Activated CD8-positive, alpha-beta T cell treated with anti-CD3 and anti-CD28 coated beads, Interleukin-2, amount 10 ng/mL, durations not matched to agents 7 days and 5 days (primary cell): ENCODE measurements at regions of chr1 and their contacts with region 1.

Region 1: DNA sequence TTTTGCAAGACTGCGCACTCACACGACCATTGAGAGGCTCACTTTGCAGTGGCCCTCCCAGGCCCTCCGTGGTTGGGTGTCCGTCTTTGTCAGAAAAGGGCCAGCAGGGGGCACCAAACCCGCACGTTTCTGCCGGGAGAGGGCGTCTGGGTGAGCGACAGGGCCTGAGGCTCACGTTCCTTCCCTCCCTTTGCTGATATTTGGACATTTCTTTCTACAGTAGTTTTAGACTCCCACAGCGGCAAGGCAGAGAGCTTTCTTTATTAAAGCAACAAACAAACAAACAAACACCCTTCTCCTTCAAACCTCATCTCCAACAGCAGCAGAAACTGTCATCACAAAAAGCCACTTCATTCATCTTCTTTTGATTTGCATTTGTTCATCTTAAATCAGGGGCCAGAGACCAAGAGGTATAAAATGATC is 79.2 kb upstream of the WDR26 start:
- DNase-seq: peak; percentile 91
- ATAC-seq: peak; percentile 97
- H3K4me3 Mint-ChIP-seq: no peak overlapping the region
- H3K27ac Mint-ChIP-seq: no peak overlapping the region
- H3K4me1 Mint-ChIP-seq: peaks cover 27% of the 10 kb centered on the region
- H3K27me3 Mint-ChIP-seq: no peaks in the 10 kb centered on the region

Region 2: DNA sequence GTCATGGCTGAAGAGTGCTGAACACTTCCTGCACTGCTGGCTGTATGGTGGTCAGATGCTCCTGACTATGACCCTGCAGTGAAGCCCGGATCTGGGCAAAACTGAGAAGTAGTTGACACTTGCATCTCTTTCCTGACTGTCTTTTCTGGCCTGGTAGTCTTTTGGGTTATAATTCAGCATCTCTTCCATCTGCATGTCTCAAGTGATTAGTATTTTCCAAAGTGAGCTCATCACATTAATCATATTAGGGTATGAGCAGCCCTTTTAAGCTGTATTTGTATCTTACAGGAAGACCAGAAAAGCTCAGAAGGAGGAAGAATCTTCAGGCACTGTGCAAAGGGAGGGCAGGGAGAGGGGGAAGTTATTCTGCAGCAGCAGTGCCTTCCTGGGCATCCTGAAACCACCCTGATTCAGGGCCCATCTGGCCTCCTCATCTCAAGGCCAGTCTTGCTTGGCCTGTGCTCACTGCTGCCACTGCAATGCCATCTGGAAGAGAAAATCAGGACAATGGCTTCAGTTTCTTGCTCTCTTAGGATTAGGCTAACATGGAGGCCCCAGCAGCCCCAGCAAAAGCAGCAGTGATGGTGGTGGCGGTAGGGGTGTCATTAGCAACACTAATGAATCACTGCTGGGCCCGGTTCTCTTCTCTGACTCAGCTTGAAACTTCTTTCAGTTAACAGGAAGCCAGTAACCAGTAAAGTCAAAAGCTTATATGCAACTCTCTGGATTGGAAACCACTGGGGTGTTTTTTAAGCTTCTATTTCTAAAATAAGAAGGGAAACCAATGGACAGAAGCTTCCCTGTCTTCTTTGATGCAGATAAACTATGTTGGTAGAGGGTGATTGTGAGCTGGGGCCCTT is 15.9 kb before region 1 on chr1:
- CTCF ChIA-PET with region 1: interaction called, 34 read pairs
- POLR2A ChIA-PET with region 1: interaction called, 7 read pairs
- DNase-seq: peak; percentile 84
- ATAC-seq: peak; percentile 93
- H3K4me3 Mint-ChIP-seq: peak overlapping the region; percentile 28
- H3K27ac Mint-ChIP-seq: peak overlapping the region; percentile 87
- H3K4me1 Mint-ChIP-seq: peaks cover 54% of the 10 kb centered on the region
- H3K27me3 Mint-ChIP-seq: no peaks in the 10 kb centered on the region

Region 3: DNA sequence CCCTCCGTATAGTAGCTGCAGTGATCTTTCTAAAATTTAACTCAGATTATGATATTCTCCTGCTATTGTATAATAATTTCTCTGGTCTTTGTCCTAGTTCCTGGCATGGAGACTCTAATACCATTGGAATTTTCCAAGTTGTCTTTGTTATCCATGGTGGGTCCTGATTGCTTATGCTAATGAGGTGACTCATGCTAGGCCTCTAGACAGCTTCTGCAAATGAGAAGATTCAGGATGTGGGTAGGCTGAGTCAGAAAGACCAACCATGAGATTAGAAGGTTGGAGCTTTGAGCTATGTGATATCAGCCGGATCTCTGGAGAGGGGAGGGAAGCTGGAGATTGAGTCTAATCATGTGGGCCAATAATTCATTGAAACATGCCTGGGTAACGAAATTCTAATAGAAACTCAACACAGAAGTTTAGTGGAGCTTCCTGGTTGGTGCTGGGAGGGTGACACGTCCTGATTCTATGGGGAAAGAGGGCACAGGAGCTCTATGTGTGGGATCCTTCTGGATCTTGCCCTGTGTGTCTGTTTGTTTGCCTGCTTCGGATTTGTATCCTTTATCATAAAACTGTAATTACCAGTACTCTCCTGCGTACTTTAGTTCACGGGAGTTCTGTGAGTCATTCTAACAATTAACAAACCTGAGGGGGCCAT is 29.1 kb after region 1 on chr1:
- CTCF ChIA-PET with region 1: interaction called, 26 read pairs
- POLR2A ChIA-PET with region 1: no interaction called
- DNase-seq: peak; percentile 57
- ATAC-seq: peak; percentile 95
- H3K4me3 Mint-ChIP-seq: no peak overlapping the region
- H3K27ac Mint-ChIP-seq: peak overlapping the region; percentile 7
- H3K4me1 Mint-ChIP-seq: peaks cover 20% of the 10 kb centered on the region
- H3K27me3 Mint-ChIP-seq: peaks cover 9% of the 10 kb centered on the region

Region 4: GRCh38 chr1:224623743-224624333 is 110.0 kb after region 1 on chr1:
- CTCF ChIA-PET with region 1: interaction called, 15 read pairs
- POLR2A ChIA-PET with region 1: interaction called, 3 read pairs
- DNase-seq: peak; percentile 94
- ATAC-seq: peak; percentile 91
- H3K4me3 Mint-ChIP-seq: peak overlapping the region; percentile 50
- H3K27ac Mint-ChIP-seq: peak overlapping the region; percentile 93
- H3K4me1 Mint-ChIP-seq: peaks cover 35% of the 10 kb centered on the region
- H3K27me3 Mint-ChIP-seq: peaks cover 31% of the 10 kb centered on the region

Region 5: GRCh38 chr1:224922404-224923164 is 408.8 kb after region 1 on chr1:
- CTCF ChIA-PET with region 1: interaction called, 48 read pairs
- POLR2A ChIA-PET with region 1: no interaction called
- DNase-seq: no peak
- ATAC-seq: peak; percentile 60
- H3K4me3 Mint-ChIP-seq: no peak overlapping the region
- H3K27ac Mint-ChIP-seq: no peak overlapping the region
- H3K4me1 Mint-ChIP-seq: peaks cover 1% of the 10 kb centered on the region
- H3K27me3 Mint-ChIP-seq: peaks cover 10% of the 10 kb centered on the region